HEK293 (cell line): ENCODE measurements at regions of chr9 and their contacts with region 1.

Region 1: DNA sequence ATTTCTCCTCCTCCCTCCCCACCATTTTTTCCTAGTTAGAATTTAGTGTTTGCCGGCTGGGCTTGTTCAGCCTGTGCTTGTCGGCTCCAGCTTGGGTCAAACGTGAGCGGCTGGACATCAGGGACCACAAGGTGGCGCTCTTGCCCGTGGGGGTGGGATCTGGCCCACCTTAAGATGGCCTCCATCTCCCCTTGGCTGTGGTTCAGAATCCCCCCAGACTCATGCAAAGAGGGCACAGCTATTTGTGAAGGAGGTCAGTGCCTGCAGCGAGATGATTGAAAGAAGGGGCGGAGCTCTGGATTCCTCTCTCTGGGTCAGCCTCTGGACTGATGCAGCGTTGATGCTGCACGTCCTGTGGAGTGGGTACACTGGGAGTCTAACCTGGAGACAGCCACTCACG is 283.3 kb upstream of the TUT7 start:
- H3K4me3 ChIP-seq: no peak overlapping the region
- H3K27ac ChIP-seq: no peak overlapping the region
- H3K4me1 ChIP-seq: peaks cover 13% of the 10 kb centered on the region
- CTCF ChIP-seq: peak; percentile 55; the same call in 1 of the 2 replicates

Region 2: GRCh38 chr9:86486891-86487837 is 150.4 kb before region 1 on chr9:
- CTCF ChIA-PET with region 1: interaction called, 13 read pairs
- POLR2A ChIA-PET with region 1: no interaction called
- H3K4me3 ChIP-seq: no peak overlapping the region
- H3K27ac ChIP-seq: no peak overlapping the region
- H3K4me1 ChIP-seq: peaks cover 3% of the 10 kb centered on the region; the same call in 1 of the 2 replicates
- CTCF ChIP-seq: peak; percentile 38; the same call in 1 of the 2 replicates

Region 3: DNA sequence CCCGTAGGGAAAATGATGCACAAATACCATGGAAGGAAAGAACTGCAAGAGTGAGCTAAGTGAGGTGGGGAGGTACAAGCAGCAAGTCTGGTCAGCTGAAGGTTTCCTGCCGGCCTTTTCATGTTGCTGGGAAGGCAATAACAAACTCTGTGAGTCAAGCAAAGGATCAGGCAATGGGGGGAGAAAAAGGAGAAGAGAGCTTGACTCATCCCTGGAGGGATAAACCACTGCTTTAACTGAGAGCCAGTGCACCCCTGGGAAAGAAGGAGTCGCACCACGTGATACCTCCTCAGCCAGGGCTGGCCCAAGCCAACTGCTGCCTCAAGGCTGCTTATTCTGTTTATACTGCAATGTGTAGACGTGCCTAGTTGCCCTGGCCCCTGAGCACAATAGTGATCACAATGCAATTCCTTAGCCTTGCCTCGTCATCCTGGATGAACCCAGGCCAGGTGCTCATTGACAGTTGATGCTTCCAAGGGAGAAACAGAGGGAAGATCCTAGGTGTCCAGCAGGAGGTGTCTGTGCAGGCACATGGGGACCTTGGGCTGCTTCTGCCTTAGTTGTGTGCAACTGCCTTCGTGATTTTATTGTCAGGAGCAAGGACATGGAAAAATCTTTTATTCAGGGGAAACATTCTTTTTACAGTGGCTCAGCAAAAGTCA is 80.3 kb before region 1 on chr9:
- CTCF ChIA-PET with region 1: no interaction called
- POLR2A ChIA-PET with region 1: no interaction called
- H3K4me3 ChIP-seq: no peak overlapping the region
- H3K27ac ChIP-seq: no peak overlapping the region
- H3K4me1 ChIP-seq: no peaks in the 10 kb centered on the region; the same call in 1 of the 2 replicates
- CTCF ChIP-seq: no peak

Region 4: DNA sequence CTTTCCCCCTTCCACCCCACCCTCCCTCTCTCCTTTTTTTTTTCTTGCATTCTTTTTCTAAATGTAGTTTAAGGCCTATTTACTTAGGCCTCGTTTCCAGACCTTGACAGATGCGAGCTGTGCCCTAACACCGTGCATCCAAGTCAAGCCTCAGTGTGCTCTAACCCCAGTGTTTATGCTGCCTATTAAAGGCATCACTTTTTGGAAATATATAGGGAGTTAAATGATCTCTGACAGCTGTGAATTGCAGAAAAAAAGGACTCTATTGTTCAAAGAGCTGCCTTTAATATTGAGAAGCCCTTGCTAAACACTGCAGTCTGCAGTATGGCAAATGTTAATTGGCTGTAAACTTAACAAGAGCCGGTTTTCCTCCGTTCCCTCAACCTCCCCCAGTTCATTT is 12.9 kb before region 1 on chr9:
- CTCF ChIA-PET with region 1: interaction called, 20 read pairs
- POLR2A ChIA-PET with region 1: no interaction called
- H3K4me3 ChIP-seq: no peak overlapping the region
- H3K27ac ChIP-seq: no peak overlapping the region
- H3K4me1 ChIP-seq: no peaks in the 10 kb centered on the region
- CTCF ChIP-seq: no peak